Adrenal gland (tissue), 19 donors: ENCODE measurements at regions of chr1 and their contacts with region 1.

Region 1: DNA sequence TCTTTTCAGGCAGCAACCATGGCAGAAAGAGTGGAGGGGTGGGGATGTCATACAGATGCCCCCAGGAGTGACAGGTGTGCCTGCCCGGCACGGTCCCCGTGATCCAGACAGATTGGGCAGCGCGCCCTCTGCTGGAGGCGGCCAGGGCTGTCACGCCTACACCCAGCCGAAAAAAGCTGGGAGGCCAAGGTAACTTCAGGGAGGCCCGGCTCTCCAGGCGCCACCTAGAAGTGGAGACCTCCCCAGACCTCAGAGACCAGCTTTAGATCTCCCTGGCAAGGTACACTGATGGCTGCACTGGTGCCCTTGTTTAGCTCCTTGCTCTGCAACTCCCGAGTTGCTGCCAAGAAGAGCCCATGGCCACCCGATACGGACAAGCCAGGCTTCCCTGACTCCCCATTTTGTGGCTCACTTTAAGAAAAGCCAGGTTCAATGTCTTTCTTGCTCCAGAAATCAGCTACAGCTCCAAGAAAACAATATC is 6.6 kb downstream of the GOLT1A start:
- DNase-seq: peak; percentile 49 to 80 (median 73)
- H3K4me3 ChIP-seq: no peak overlapping the region
- H3K27ac ChIP-seq: no peak overlapping the region
- H3K4me1 ChIP-seq: no peaks in the 10 kb centered on the region
- H3K27me3 ChIP-seq: peaks cover 5% of the 10 kb centered on the region
- CTCF ChIP-seq: peak; percentile 71 to 92 (median 78)
- POLR2A ChIP-seq: no peak

Region 2: DNA sequence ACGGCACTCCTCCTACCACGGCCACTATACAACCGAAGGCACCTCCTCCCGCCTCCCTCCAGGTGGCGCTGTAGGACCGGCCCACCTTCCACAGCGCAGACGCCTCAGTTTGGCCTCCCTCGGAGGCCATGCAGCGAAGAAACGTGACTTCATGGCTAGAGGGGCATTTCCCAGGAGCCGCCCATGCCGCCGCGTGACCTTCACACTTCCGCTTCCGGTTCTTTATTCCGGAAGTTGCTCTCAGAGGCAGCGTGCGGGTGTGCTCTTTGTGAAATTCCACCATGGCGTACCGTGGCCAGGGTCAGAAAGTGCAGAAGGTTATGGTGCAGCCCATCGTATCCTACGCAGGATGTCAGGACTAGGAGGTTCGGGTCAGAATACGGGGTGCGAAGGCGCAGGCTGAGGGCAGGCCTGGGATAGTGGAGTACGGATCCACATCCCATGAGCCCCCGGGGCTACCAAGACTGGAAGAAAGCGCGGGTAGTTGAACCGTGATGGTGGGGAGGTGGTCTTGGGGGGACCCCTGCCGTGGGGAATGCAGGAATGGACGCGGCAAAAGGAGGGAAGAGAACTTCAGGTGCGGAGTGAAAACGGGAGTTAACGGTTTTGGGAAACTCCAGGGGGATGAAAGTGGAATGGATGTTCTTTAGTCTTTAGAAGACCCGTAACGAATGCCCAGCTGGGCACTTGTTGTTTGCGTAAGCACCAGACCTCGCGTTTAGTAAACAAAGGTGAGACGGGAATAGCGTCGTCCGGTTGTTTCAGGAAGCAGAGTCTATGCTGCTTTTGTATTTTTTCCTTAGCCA is 345.6 kb before region 1 on chr1 and contains the start of gene SNRPE:
- intact Hi-C with region 1: loop called in 1 of 2 experiments (anchors 10 kb)
- DNase-seq: peak; percentile 96 to 98 (median 97)
- H3K4me3 ChIP-seq: peak within 1 kb of the TSS; percentile 36 to 91 (median 72)
- H3K27ac ChIP-seq: peak within 1 kb of the TSS in 4 of 5 donors; percentile 46 to 85 (median 76)
- H3K4me1 ChIP-seq: peaks cover 15 to 18% of the 10 kb centered on the region in 2 donors
- H3K27me3 ChIP-seq: no peaks in the 10 kb centered on the region
- CTCF ChIP-seq: peak; percentile 90 to 100 (median 98)
- POLR2A ChIP-seq: peak in 1 of 2 donors; percentile 39
- total RNA-seq, gene SNRPE: 30.1 to 141 (median 91.2) TPM

Region 3: GRCh38 chr1:204154568-204155255 is 52.5 kb before region 1 on chr1:
- intact Hi-C with region 1: loop called in 1 of 2 experiments (anchors 5 kb)
- DNase-seq: no peak
- H3K4me3 ChIP-seq: no peak overlapping the region
- H3K27ac ChIP-seq: no peak overlapping the region
- H3K4me1 ChIP-seq: peaks cover 3 to 12% of the 10 kb centered on the region in 2 donors
- H3K27me3 ChIP-seq: no peaks in the 10 kb centered on the region
- CTCF ChIP-seq: no peak
- POLR2A ChIP-seq: no peak

Region 4: DNA sequence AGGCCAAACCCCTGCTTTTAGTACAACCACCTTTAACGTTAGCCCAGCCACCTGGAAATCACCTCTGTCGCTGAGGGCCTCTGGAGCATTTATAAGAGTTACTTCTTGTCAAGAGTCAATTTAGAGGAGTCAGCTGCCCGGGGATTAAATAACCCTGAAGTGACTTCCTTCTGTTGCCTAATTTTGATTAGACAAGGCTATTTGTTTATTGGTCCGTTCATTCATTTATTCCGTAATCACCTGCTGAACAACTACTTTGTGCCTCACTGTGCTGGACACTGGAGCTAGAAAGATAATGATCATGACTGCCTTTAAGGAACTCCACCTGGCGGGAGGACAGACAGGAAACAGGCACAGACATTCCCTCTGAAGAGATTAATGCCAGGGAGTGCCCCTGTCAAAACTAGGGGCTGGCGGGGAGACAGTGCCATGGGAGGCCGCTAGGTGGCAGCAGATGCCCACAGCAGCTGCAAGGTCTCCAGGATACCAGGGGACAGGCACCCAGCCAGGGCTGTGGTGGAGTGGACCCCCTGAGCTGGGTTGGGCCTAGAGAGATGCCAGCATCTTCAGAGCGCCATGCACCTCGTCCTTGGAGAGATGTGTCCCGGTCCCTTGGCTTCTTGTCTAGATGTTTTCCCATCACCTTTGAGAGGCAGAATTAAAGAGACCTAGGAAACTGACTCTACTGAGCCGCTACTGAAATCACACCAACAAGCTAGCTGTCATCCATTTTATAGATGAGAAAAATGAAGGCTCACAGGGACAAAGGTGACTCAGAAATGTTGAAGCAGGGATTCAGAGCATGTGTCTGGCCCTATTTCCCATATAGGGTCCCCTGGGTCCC is 44.7 kb before region 1 on chr1:
- intact Hi-C with region 1: loop called (anchors 5 kb)
- DNase-seq: peak; percentile 71 to 91 (median 80)
- H3K4me3 ChIP-seq: no peak overlapping the region
- H3K27ac ChIP-seq: no peak overlapping the region
- H3K4me1 ChIP-seq: no peaks in the 10 kb centered on the region
- H3K27me3 ChIP-seq: no peaks in the 10 kb centered on the region
- CTCF ChIP-seq: peak; percentile 96 to 100 (median 97)
- POLR2A ChIP-seq: no peak